Naive thymus-derived CD8-positive, alpha-beta T cell (primary cell): ENCODE measurements at regions of chr2 and their contacts with region 1.

Region 1: DNA sequence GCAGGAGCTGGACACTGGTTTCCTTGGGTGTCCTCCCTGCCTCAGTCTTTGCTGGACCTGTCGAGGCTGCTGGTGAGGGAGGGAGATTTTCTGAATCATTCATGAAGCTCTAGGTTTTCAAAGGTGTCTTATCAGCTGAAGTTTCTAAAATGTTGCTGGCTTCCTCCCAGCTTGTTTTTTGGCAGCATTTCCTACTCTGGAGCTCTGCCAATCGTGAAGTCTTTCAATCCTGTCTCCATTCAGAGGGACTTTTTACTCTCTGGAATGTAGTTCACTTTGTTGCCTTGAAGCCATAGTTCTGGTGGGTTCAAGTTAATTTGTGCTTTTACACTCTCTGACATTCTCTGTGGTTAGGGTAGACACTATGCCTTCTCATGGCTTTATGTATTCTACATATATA is 23.9 kb downstream of the SNTG2 start:
- DNase-seq: peak in 2 of 10 donors; percentile 54 to 55
- ATAC-seq: peak; percentile 38 to 41
- H3K4me3 Mint-ChIP-seq: peak overlapping the region; percentile 61 to 88 (median 84)
- H3K27ac Mint-ChIP-seq: peak overlapping the region; percentile 73 to 96 (median 94)
- H3K4me1 Mint-ChIP-seq: peaks cover 32 to 87% (median 78%) of the 10 kb centered on the region in 4 donors
- H3K27me3 Mint-ChIP-seq: peaks cover 0 to 2% (median 0%) of the 10 kb centered on the region in 5 donors

Region 2: DNA sequence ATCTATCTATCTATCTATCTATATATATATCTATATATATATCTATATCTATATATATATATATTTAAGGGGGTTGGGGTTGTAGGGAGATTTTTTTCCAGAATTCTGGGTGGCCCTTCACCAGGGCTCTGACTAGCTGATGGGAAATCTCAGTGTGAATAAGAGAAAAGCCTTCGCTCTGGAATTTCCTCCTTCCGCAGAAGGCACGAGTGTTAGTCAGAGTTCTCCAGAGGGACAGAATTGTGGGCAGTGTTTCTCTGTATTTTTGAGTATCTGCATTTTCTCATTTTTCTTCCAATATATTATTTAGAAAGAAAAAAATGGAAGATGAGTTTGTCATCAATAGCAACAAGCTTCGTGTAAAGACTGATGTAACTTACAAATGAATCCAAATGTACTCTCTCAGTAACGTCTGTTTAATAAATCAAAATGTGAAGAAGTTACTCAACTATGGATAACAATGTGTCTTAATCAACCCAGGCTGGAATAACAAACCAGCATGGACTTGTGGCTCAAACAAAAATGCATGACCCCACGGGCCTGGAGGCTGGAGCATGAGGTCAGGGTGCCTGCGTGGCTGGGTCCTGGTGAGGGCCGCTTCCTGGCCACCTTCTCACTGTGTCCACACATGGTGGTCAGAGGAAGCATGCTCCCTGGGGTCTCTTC is 34.4 kb before region 1 on chr2:
- POLR2A ChIA-PET with region 1: no interaction called
- DNase-seq: no peak
- ATAC-seq: no peak
- H3K4me3 Mint-ChIP-seq: no peak overlapping the region
- H3K27ac Mint-ChIP-seq: no peak overlapping the region
- H3K4me1 Mint-ChIP-seq: no peaks in the 10 kb centered on the region
- H3K27me3 Mint-ChIP-seq: peaks cover 0 to 4% (median 0%) of the 10 kb centered on the region in 5 donors

Region 3: GRCh38 chr2:950080-950966 is 24.2 kb before region 1 on chr2 and contains the start of gene SNTG2:
- POLR2A ChIA-PET with region 1: interaction called, 18 read pairs
- DNase-seq: peak; percentile 53 to 81 (median 69)
- ATAC-seq: peak; percentile 88 to 92
- H3K4me3 Mint-ChIP-seq: peak within 1 kb of the TSS; percentile 76 to 93 (median 85)
- H3K27ac Mint-ChIP-seq: peak within 1 kb of the TSS in 8 of 10 donors; percentile 40 to 91 (median 76)
- H3K4me1 Mint-ChIP-seq: peaks cover 24 to 55% (median 49%) of the 10 kb centered on the region in 4 donors
- H3K27me3 Mint-ChIP-seq: peaks cover 4 to 34% (median 7%) of the 10 kb centered on the region in 5 donors
- polyA plus RNA-seq, gene SNTG2: 0.66 to 1.2 (median 0.94) TPM

Region 4: GRCh38 chr2:960061-960736 is 14.3 kb before region 1 on chr2:
- POLR2A ChIA-PET with region 1: interaction called, 18 read pairs
- DNase-seq: no peak
- ATAC-seq: no peak
- H3K4me3 Mint-ChIP-seq: no peak overlapping the region
- H3K27ac Mint-ChIP-seq: peak overlapping the region in 2 of 10 donors; percentile 29 to 46
- H3K4me1 Mint-ChIP-seq: peaks cover 9 to 30% (median 18%) of the 10 kb centered on the region in 4 donors
- H3K27me3 Mint-ChIP-seq: no peaks in the 10 kb centered on the region

Region 5: DNA sequence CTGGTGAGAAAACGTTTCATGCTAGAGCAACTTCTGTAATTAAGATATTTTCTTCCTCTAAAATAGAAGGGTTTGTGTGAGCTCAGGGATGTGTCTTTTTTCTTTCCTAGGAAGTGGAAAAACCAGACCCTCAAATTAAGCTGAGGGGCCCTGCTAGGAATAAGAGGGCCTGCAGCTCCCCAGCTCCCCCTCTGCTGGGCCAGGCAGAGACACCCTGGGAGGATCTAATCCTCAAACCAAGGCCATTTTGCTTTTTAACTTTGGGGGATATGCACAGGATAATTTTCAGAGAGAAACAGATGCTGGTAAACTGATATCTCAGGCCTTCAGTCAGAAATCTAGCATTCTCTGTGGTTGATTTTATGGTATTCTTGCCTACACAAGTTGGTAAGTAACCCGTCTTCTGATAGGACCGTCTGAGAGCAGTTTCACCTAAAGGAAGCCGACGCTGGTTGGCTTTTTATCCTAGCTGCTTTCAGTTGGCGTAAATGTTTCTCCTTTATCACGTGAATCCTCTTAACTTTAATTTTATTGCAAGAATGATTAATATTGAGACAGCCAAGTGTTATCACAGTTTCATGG is 10.9 kb after region 1 on chr2:
- POLR2A ChIA-PET with region 1: interaction called, 56 read pairs
- DNase-seq: peak in 5 of 10 donors; percentile 24 to 61 (median 45)
- ATAC-seq: peak; percentile 93 to 94
- H3K4me3 Mint-ChIP-seq: peak overlapping the region; percentile 62 to 84 (median 79)
- H3K27ac Mint-ChIP-seq: peak overlapping the region; percentile 82 to 96 (median 90)
- H3K4me1 Mint-ChIP-seq: peaks cover 18 to 53% (median 40%) of the 10 kb centered on the region in 4 donors
- H3K27me3 Mint-ChIP-seq: peaks cover 0 to 13% (median 5%) of the 10 kb centered on the region in 5 donors